GM12878 (cell line): ENCODE measurements at regions of chr14 and their contacts with region 1.

Region 1: DNA sequence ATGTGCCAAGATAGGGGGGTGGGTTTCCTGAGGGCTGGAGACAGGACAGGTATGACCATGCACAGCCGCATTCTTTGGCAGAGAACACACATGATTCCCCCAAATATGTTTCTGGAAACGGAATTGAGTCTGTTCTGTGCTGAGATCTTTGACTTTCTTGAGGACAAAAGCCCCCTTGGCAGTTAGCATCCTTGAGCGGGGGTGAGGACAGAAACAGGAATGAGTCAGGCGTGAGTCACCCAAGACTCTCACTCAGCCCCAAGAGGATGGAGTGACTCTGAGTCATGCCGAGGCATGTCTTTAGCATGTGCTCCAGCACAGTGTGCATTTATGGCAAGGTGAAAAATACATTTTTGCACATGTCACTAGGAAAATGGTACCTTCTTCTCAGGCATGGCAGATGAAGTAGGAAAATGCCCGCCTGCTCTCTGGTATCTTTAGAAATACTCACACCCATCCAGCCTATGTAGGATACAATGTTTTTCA is 52.1 kb downstream of the DAD1 start:
- DNase-seq: peak; percentile 94
- ATAC-seq: peak; percentile 75
- H3K4me3 ChIP-seq: peak overlapping the region; percentile 41; the same call in 1 of the 2 replicates
- H3K27ac ChIP-seq: peak overlapping the region; percentile 97
- H3K4me1 ChIP-seq: peaks cover 73% of the 10 kb centered on the region
- H3K27me3 ChIP-seq: no peaks in the 10 kb centered on the region
- CTCF ChIP-seq: no peak
- EP300 ChIP-seq: peak; percentile 75 to 82; a peak in 3 of 4 replicates
- POLR2A ChIP-seq: peak; percentile 59
- RAD21 ChIP-seq: peak; percentile 35; the same call in 1 of the 2 replicates

Region 2: GRCh38 chr14:22478670-22479069 is 58.2 kb before region 1 on chr14:
- CTCF ChIA-PET with region 1: interaction called, 25 read pairs
- POLR2A ChIA-PET with region 1: interaction called, 46 read pairs
- RAD21 ChIA-PET with region 1: interaction called, 95 read pairs
- SMC1A ChIA-PET with region 1: interaction called, 65 read pairs
- in situ Hi-C with region 1: no loop called
- intact Hi-C with region 1: no loop called
- DNase-seq: no peak
- ATAC-seq: peak; percentile 5; the same call in 1 of the 3 replicates
- H3K4me3 ChIP-seq: peak overlapping the region; percentile 66; the same call in 1 of the 2 replicates
- H3K27ac ChIP-seq: peak overlapping the region; percentile 98
- H3K4me1 ChIP-seq: peaks cover 71% of the 10 kb centered on the region
- H3K27me3 ChIP-seq: no peaks in the 10 kb centered on the region
- CTCF ChIP-seq: no peak
- EP300 ChIP-seq: 0 out of 4 replicates have a peak, but pooled peaks of 1 of the 2 experiments have one; percentile 1
- POLR2A ChIP-seq: no peak
- RAD21 ChIP-seq: no peak

Region 3: DNA sequence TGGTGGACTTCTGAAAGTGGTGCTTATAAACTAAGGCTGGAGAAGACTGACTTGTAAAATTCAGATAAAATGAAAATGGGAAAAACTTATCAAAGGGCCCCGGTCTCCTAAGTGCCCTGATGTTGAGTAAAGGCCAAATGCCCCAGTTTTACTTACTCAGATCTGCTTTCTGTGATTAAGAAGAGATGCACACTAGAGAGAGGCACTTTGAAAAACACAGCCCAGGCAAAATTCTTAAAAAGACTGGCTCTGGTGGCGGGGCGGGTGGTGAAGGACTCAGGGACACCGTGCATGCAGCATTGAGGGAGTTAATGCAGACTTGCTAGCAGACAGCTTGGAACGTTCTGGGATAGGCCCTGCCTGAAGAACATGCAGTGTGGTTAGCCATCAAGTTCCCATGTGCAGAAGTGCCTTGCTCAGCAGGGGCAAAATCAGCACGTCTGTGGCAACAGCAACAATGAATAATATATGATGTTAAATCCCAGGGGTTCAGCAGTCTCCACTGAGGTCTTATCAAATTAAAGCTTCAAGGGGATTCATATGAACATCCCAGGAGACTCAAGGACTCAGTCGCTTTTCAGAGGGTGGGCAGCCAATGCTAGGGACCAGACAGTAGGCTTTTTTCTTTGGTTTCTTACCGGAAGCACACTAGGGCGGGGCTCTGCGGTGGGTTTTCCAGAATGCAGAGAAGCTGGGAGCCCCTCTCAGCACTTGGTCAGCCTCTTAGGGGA is 52.9 kb before region 1 on chr14:
- CTCF ChIA-PET with region 1: interaction called, 25 read pairs
- POLR2A ChIA-PET with region 1: interaction called, 96 read pairs
- RAD21 ChIA-PET with region 1: interaction called, 95 read pairs
- SMC1A ChIA-PET with region 1: interaction called, 139 read pairs
- in situ Hi-C with region 1: no loop called
- intact Hi-C with region 1: no loop called
- DNase-seq: no peak
- ATAC-seq: peak; percentile 39
- H3K4me3 ChIP-seq: peak overlapping the region; percentile 72
- H3K27ac ChIP-seq: peak overlapping the region; percentile 98
- H3K4me1 ChIP-seq: peaks cover 84% of the 10 kb centered on the region
- H3K27me3 ChIP-seq: no peaks in the 10 kb centered on the region
- CTCF ChIP-seq: no peak
- EP300 ChIP-seq: no peak
- POLR2A ChIP-seq: peak; percentile 52
- RAD21 ChIP-seq: no peak

Region 4: DNA sequence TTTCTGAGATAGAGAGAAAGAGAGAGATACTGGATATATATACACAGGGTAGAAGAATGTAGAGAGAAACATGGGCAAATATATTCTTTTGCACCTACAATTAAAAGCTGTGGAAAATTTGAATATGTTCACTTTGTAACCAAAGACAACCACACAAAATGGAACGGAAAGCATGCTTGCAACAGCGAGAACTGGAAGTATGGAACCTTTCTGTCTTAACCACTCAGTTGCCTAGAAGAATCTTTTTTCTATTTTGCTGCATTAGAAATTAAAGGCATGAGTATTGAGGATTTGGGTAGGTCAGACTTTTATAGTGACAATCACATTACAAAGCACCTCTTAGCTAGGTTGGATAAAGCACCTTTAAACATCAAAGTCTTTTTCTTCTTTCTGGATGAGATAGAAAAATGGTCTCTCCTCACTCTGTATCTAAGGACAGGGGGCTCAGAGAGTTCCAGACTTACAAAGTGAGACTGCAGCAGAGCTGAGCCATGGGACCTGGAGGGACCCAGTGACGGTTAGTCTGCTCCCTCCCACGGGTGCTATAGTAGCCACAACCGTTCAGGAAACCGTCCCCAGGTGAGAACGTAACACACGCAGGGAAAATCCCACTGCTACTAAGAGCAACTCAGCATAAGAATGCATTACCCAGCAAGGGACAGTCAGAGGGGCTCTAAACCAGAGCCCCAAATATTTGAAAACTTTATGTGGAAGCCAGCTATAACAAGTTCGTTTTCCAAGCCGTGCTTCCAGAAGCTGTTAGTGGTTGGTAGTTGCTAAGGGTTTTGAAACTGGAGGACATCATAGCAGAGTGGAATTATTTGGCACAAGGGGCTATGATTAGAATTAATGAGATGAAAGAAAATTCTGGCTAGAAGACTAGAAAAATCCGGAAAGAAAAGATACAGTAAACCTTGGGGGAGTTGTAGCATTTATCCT is 44.9 kb before region 1 on chr14:
- CTCF ChIA-PET with region 1: interaction called, 12 read pairs
- POLR2A ChIA-PET with region 1: interaction called, 96 read pairs
- RAD21 ChIA-PET with region 1: interaction called, 55 read pairs
- SMC1A ChIA-PET with region 1: interaction called, 139 read pairs
- in situ Hi-C with region 1: no loop called
- intact Hi-C with region 1: loop called (anchors 2 kb)
- DNase-seq: no peak
- ATAC-seq: peak; percentile 57
- H3K4me3 ChIP-seq: peak overlapping the region; percentile 45
- H3K27ac ChIP-seq: peak overlapping the region; percentile 98
- H3K4me1 ChIP-seq: peaks cover 86% of the 10 kb centered on the region
- H3K27me3 ChIP-seq: no peaks in the 10 kb centered on the region
- CTCF ChIP-seq: no peak
- EP300 ChIP-seq: peak; percentile 69 to 92; a peak in 3 of 4 replicates
- POLR2A ChIP-seq: peak; percentile 68
- RAD21 ChIP-seq: peak; percentile 26; the same call in 1 of the 2 replicates

Region 5: DNA sequence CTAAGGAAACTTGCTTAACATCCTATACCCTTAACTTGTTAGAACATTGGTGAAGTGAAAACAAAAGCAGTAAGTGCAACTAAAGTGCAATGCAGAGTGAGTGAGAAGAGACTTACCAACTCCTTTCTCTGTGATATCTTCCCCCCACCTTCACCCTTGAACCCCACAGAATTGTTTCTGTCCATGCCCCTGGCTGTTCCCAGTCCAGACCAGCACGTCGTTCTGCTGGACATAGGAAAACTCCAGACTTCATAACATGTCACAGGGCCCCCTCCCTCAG is 39.8 kb before region 1 on chr14:
- CTCF ChIA-PET with region 1: interaction called, 12 read pairs
- POLR2A ChIA-PET with region 1: interaction called, 339 read pairs
- RAD21 ChIA-PET with region 1: interaction called, 27 read pairs
- SMC1A ChIA-PET with region 1: interaction called, 139 read pairs
- in situ Hi-C with region 1: no loop called
- intact Hi-C with region 1: no loop called
- DNase-seq: no peak
- ATAC-seq: peak; percentile 18
- H3K4me3 ChIP-seq: 0 out of 2 replicates have a peak overlapping the region, but pooled peaks have one; percentile 35
- H3K27ac ChIP-seq: peak overlapping the region; percentile 65
- H3K4me1 ChIP-seq: peaks cover 62% of the 10 kb centered on the region
- H3K27me3 ChIP-seq: no peaks in the 10 kb centered on the region
- CTCF ChIP-seq: no peak
- EP300 ChIP-seq: no peak
- POLR2A ChIP-seq: no peak
- RAD21 ChIP-seq: no peak

Region 6: DNA sequence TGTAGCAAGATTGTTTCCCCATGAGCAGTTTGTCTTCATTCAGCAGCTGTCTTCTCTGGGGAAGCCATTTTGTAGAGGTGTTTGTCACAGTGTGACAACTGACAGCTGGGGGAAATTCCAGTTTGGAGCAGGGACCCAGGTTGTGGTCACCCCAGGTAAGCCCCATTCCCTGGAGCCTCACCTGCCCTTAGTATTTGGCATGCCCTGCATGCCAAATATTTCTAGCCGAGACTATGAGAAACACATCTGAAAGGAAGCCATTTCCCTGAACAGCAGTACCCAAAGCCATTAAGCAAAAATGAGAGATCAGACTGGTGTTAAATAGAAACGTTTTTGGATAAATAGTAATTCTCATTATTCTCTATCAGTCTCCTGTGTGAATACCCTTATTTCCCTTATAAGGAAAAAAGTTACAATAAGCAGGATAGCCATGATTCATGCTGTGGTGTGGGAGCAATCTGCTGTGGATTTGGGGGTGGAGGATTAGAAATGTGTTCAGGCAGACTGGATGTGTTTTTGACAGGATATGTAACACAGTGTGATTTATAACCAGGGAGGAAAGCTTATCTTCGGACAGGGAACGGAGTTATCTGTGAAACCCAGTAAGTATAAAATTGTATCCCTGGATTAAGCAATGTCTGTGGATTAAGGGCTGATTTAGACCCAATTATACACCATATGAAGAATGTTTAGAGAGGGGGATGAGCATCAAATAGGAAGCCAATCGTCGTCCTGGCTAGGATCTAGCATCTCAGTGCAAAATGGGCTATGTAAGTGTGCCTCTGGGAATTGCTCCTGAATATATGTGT is 16.8 kb before region 1 on chr14:
- CTCF ChIA-PET with region 1: interaction called, 100 read pairs
- POLR2A ChIA-PET with region 1: interaction called, 339 read pairs
- RAD21 ChIA-PET with region 1: interaction called, 71 read pairs
- SMC1A ChIA-PET with region 1: interaction called, 399 read pairs
- in situ Hi-C with region 1: no loop called
- intact Hi-C with region 1: no loop called
- DNase-seq: no peak
- ATAC-seq: no peak
- H3K4me3 ChIP-seq: peak overlapping the region; percentile 15; the same call in 1 of the 2 replicates
- H3K27ac ChIP-seq: peak overlapping the region; percentile 80
- H3K4me1 ChIP-seq: peaks cover 99% of the 10 kb centered on the region
- H3K27me3 ChIP-seq: no peaks in the 10 kb centered on the region
- CTCF ChIP-seq: no peak
- EP300 ChIP-seq: no peak
- POLR2A ChIP-seq: no peak
- RAD21 ChIP-seq: no peak

Region 7: GRCh38 chr14:22549981-22550673 is 13.2 kb after region 1 on chr14:
- CTCF ChIA-PET with region 1: interaction called, 58 read pairs
- POLR2A ChIA-PET with region 1: interaction called, 74 read pairs
- RAD21 ChIA-PET with region 1: interaction called, 48 read pairs
- SMC1A ChIA-PET with region 1: interaction called, 105 read pairs
- in situ Hi-C with region 1: no loop called
- intact Hi-C with region 1: loop called (anchors 1 kb)
- DNase-seq: peak; percentile 87
- ATAC-seq: peak; percentile 85
- H3K4me3 ChIP-seq: no peak overlapping the region; the same call in 1 of the 2 replicates
- H3K27ac ChIP-seq: peak overlapping the region; percentile 97
- H3K4me1 ChIP-seq: peaks cover 61% of the 10 kb centered on the region
- H3K27me3 ChIP-seq: no peaks in the 10 kb centered on the region
- CTCF ChIP-seq: no peak
- EP300 ChIP-seq: peak; percentile 60 to 82; a peak in 2 of 4 replicates
- POLR2A ChIP-seq: peak; percentile 53; the same call in 1 of the 2 replicates
- RAD21 ChIP-seq: no peak; the same call in 1 of the 2 replicates

Region 8: DNA sequence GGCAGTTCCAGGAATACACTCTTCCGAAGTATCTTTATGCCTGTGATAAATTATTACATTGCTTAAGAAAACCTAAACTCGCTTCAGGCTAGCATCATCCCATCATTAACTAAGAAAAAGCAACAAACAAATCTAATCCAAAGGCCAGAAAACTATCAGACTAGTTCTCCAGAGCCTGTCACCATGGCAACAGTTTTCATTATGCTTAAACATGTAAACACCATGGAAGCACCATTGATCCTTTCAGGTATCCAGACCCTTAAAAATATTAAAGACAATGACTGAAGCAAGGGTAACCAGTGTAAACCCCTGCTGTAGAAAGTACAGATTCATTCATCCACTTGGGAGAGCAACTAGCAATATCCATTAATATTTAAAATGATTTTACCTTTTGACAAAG is 42.3 kb after region 1 on chr14:
- CTCF ChIA-PET with region 1: no interaction called
- POLR2A ChIA-PET with region 1: no interaction called
- RAD21 ChIA-PET with region 1: no interaction called
- SMC1A ChIA-PET with region 1: no interaction called
- in situ Hi-C with region 1: no loop called
- intact Hi-C with region 1: no loop called
- DNase-seq: no peak
- ATAC-seq: no peak
- H3K4me3 ChIP-seq: no peak overlapping the region
- H3K27ac ChIP-seq: no peak overlapping the region
- H3K4me1 ChIP-seq: peaks cover 17% of the 10 kb centered on the region
- H3K27me3 ChIP-seq: no peaks in the 10 kb centered on the region
- CTCF ChIP-seq: no peak
- EP300 ChIP-seq: no peak
- POLR2A ChIP-seq: no peak
- RAD21 ChIP-seq: no peak